ENCODE measurements at regions of chr19 and their contacts with region 1.

Region 1: GRCh38 chr19:48842789-48843162 is 6.5 kb upstream of the HSD17B14 start:
- DNase-seq: peak; percentile 47
- H3K4me3 Mint-ChIP-seq: no peak overlapping the region
- H3K27ac Mint-ChIP-seq: no peak overlapping the region
- H3K4me1 Mint-ChIP-seq: no peaks in the 10 kb centered on the region
- H3K27me3 Mint-ChIP-seq: no peaks in the 10 kb centered on the region

Region 2: GRCh38 chr19:48646001-48646721 is 196.6 kb before region 1 on chr19 and contains the start of gene CA11:
- CTCF ChIA-PET with region 1: interaction called, 10 read pairs
- POLR2A ChIA-PET with region 1: no interaction called
- intact Hi-C with region 1: loop called (anchors 2 kb)
- DNase-seq: peak; percentile 96
- H3K4me3 Mint-ChIP-seq: peak within 1 kb of the TSS; percentile 82
- H3K27ac Mint-ChIP-seq: peak within 1 kb of the TSS; percentile 77
- H3K4me1 Mint-ChIP-seq: peaks cover 35% of the 10 kb centered on the region
- H3K27me3 Mint-ChIP-seq: no peaks in the 10 kb centered on the region
- total RNA-seq, gene CA11: 12.7 to 15.9 TPM

Region 3: GRCh38 chr19:48683349-48683748 is 159.4 kb before region 1 on chr19:
- CTCF ChIA-PET with region 1: no interaction called
- POLR2A ChIA-PET with region 1: no interaction called
- intact Hi-C with region 1: no loop called
- DNase-seq: peak; percentile 20
- H3K4me3 Mint-ChIP-seq: no peak overlapping the region
- H3K27ac Mint-ChIP-seq: no peak overlapping the region
- H3K4me1 Mint-ChIP-seq: no peaks in the 10 kb centered on the region
- H3K27me3 Mint-ChIP-seq: no peaks in the 10 kb centered on the region

Region 4: GRCh38 chr19:48780631-48781391 is 62.0 kb before region 1 on chr19:
- CTCF ChIA-PET with region 1: interaction called, 15 read pairs
- POLR2A ChIA-PET with region 1: interaction called, 3 read pairs
- intact Hi-C with region 1: no loop called
- DNase-seq: no peak
- H3K4me3 Mint-ChIP-seq: no peak overlapping the region
- H3K27ac Mint-ChIP-seq: no peak overlapping the region
- H3K4me1 Mint-ChIP-seq: peaks cover 3% of the 10 kb centered on the region
- H3K27me3 Mint-ChIP-seq: peaks cover 11% of the 10 kb centered on the region

Region 5: DNA sequence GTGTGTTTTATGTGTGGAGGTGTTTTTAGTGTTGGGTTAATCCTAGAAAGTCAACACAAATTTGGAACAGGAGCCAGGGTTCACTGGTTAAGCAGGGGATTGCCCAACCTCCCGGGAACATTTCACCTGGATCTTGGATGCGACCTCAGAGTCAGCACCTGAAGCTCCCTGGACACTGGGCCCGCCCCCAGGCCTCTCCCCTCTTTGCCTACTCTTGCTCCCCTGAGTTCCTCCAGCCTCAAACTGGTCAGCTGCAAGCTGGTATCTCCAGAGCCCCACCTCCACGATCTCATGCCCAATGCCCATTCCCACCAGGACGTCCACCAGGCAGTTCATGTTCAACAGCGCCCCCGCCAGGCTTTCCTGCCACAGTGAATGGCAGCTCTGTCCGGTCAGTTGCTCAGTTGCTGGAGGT is 16.2 kb before region 1 on chr19:
- CTCF ChIA-PET with region 1: interaction called, 29 read pairs
- POLR2A ChIA-PET with region 1: no interaction called
- intact Hi-C with region 1: no loop called
- DNase-seq: no peak
- H3K4me3 Mint-ChIP-seq: no peak overlapping the region
- H3K27ac Mint-ChIP-seq: no peak overlapping the region
- H3K4me1 Mint-ChIP-seq: no peaks in the 10 kb centered on the region
- H3K27me3 Mint-ChIP-seq: no peaks in the 10 kb centered on the region

Region 6: GRCh38 chr19:48858984-48859710 is 16.4 kb after region 1 on chr19:
- CTCF ChIA-PET with region 1: interaction called, 26 read pairs
- POLR2A ChIA-PET with region 1: interaction called, 5 read pairs
- intact Hi-C with region 1: no loop called
- DNase-seq: peak; percentile 90
- H3K4me3 Mint-ChIP-seq: peak overlapping the region; percentile 95
- H3K27ac Mint-ChIP-seq: peak overlapping the region; percentile 80
- H3K4me1 Mint-ChIP-seq: peaks cover 3% of the 10 kb centered on the region
- H3K27me3 Mint-ChIP-seq: no peaks in the 10 kb centered on the region

Region 7: GRCh38 chr19:48933382-48933932 is 90.7 kb after region 1 on chr19 and contains the start of gene DHDH:
- CTCF ChIA-PET with region 1: no interaction called
- POLR2A ChIA-PET with region 1: no interaction called
- intact Hi-C with region 1: no loop called
- DNase-seq: peak; percentile 89
- H3K4me3 Mint-ChIP-seq: peak within 1 kb of the TSS; percentile 78
- H3K27ac Mint-ChIP-seq: peak within 1 kb of the TSS; percentile 69
- H3K4me1 Mint-ChIP-seq: peaks cover 10% of the 10 kb centered on the region
- H3K27me3 Mint-ChIP-seq: no peaks in the 10 kb centered on the region
- total RNA-seq, gene DHDH: 2.0 to 2.8 TPM

Measured in activated CD4-positive, alpha-beta memory T cell treated with anti-CD3 and anti-CD28 coated beads for 36 hours (primary cell).